Right ventricle myocardium inferior (tissue), 1 donor: ENCODE measurements at regions of chr15 and their contacts with region 1.

Region 1: DNA sequence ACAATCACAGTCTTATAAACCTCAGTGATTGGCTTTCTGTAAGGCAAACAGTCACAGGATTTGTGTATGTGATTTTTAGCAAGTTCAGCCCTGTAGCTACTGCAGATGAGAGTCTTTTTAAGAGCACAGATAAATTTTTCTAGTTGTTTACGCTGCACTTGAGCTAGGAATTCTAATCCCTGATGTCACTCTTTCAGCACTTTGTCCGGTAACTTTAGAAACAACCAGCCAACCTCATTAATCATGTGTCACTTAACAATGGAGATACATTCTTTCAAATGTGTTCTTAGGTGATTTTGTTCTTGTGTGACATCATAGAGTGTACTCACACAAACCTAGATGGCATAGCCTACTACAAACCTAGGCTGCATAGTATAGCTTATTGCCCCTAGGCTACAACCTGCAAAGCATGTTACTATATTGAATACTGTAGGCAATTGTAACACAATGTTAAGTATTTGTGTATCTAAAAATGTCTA is 36.8 kb upstream of the GOLGA6L2 start:
- DNase-seq: no peak
- ATAC-seq: peak; percentile 76

Region 2: DNA sequence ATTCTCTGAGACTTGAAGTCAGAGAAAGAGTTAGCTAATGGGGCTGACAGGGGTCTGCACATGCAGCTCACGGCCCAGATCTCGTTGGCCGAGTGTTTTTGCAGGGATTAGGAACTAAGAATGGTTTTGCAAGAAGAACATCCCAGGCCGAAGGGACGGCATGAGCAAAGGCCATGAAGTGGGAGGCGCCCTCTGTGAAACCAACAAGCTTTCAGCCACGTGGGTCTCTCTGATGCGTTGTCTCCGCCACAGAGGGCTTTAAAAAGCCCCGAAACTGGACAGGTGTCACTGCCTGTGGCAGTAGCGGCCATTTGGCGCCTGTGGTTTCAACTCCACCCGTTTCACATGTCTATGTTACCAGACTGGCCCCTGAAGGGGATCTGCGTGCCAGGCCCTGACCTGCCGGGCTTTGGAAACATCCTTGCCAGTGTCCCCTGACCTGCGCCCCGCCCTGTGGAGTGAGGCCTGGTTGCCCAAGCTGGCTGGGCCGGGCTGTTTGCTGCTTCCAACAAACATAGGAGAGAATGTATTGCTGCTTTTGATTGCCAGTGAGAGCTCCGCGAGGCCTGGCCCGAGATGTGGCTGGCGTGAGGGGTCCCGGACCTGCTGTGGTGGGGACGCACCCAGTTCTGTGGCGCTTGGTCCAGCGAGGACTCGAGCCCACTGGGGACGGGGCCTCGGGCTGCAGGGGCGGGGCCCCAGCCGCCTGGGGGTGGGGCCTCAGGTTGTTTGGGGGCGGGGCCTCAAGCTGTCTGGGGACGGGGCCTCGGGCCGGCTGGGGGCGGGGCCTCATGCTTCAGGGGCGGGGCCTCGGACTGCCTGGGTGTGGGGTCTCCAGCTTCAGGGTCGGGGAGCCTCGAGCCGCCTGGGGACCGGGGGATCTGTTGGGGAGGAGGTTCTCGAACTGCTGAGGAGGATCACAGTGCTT is 67.2 kb before region 1 on chr15:
- intact Hi-C with region 1: loop called (anchors 10 kb)
- DNase-seq: no peak
- ATAC-seq: no peak

Region 3: GRCh38 chr15:23516866-23517265 is 33.0 kb after region 1 on chr15:
- intact Hi-C with region 1: no loop called
- DNase-seq: no peak
- ATAC-seq: no peak